ENCODE measurements at regions of chr1 and their contacts with region 1.

Region 1: GRCh38 chr1:23282957-23283356 is 61.1 kb downstream of the HNRNPR start:
- DNase-seq: no peak
- ATAC-seq: no peak
- H3K4me3 ChIP-seq: no peak overlapping the region
- H3K27ac ChIP-seq: no peak overlapping the region
- H3K4me1 ChIP-seq: peaks cover 0 to 13% (median 0%) of the 10 kb centered on the region in 9 donors
- H3K27me3 ChIP-seq: no peaks in the 10 kb centered on the region
- CTCF ChIP-seq: no peak

Region 2: GRCh38 chr1:23168457-23169194 is 114.3 kb before region 1 on chr1 and contains the start of gene LUZP1:
- intact Hi-C with region 1: no loop called
- DNase-seq: peak; percentile 91 to 92
- ATAC-seq: peak; percentile 92 to 98 (median 94)
- H3K4me3 ChIP-seq: peak within 1 kb of the TSS; percentile 54 to 95 (median 90)
- H3K27ac ChIP-seq: peak within 1 kb of the TSS; percentile 87 to 98 (median 96)
- H3K4me1 ChIP-seq: peaks cover 6 to 69% (median 46%) of the 10 kb centered on the region in 9 donors
- H3K27me3 ChIP-seq: no peaks in the 10 kb centered on the region
- CTCF ChIP-seq: peak in 1 of 9 donors; percentile 21
- total RNA-seq, gene LUZP1: 26.3 to 40.1 (median 32.2) TPM

Region 3: GRCh38 chr1:23216771-23217420 is 66.1 kb before region 1 on chr1:
- intact Hi-C with region 1: loop called in 6 of 10 experiments (anchors 5 to 10 kb)
- DNase-seq: peak in 1 of 2 donors; percentile 34
- ATAC-seq: peak in 1 of 8 donors; percentile 45
- H3K4me3 ChIP-seq: peak overlapping the region in 9 of 10 donors; percentile 31 to 58 (median 49)
- H3K27ac ChIP-seq: no peak overlapping the region
- H3K4me1 ChIP-seq: peaks cover 0 to 14% (median 6%) of the 10 kb centered on the region in 9 donors
- H3K27me3 ChIP-seq: peaks cover 20 to 74% (median 56%) of the 10 kb centered on the region in 7 donors
- CTCF ChIP-seq: peak; percentile 38 to 75 (median 69)

Measured in heart right ventricle (tissue), 16 donors.